ENCODE measurements at regions of chr14 and their contacts with region 1.

Region 1: GRCh38 chr14:60164712-60165546 is at the start of gene DHRS7:
- DNase-seq: peak; percentile 79
- H3K4me3 Mint-ChIP-seq: peak within 1 kb of the TSS; percentile 89
- H3K27ac Mint-ChIP-seq: peak within 1 kb of the TSS; percentile 81
- H3K4me1 Mint-ChIP-seq: peaks cover 14% of the 10 kb centered on the region
- H3K27me3 Mint-ChIP-seq: no peaks in the 10 kb centered on the region
- CTCF ChIP-seq: peak; percentile 52
- total RNA-seq, gene DHRS7: 71.4 and 96.4 TPM in 2 replicates

Region 2: GRCh38 chr14:59964251-59965007 is 200.5 kb before region 1 on chr14:
- CTCF ChIA-PET with region 1: interaction called, 23 read pairs
- POLR2A ChIA-PET with region 1: interaction called, 6 read pairs
- intact Hi-C with region 1: loop called (anchors 1 kb)
- DNase-seq: peak; percentile 3
- H3K4me3 Mint-ChIP-seq: peak overlapping the region; percentile 83
- H3K27ac Mint-ChIP-seq: no peak overlapping the region
- H3K4me1 Mint-ChIP-seq: peaks cover 18% of the 10 kb centered on the region
- H3K27me3 Mint-ChIP-seq: no peaks in the 10 kb centered on the region
- CTCF ChIP-seq: no peak

Region 3: DNA sequence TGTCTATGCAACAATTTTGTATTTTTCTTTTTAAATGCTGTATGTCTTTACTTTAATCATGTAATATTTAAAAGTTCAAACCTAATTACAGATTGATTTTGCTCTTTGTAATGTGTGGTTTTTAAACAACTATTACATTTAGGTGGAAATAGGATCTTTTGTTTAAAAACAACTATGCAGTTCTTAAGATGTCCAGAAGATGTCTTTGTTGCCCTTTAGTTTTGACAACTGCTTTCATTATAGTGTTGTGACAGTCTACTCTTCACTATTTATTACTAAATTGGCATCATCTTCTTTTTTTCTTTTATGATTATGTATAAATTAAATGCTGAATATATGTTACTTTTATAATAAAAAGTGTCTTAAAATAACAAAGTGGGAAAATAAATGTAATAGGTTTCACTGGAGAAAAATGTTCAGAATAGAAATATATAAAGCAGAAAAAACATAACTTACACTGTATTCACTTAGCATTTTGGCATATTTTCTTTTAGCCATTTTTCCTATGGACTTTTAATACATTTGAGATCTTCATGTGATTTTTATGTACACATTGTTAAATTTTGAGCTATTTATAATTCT is 100.3 kb before region 1 on chr14:
- CTCF ChIA-PET with region 1: interaction called, 20 read pairs
- POLR2A ChIA-PET with region 1: interaction called, 11 read pairs
- intact Hi-C with region 1: loop called (anchors 1 kb)
- DNase-seq: peak; percentile 44
- H3K4me3 Mint-ChIP-seq: no peak overlapping the region
- H3K27ac Mint-ChIP-seq: no peak overlapping the region
- H3K4me1 Mint-ChIP-seq: peaks cover 8% of the 10 kb centered on the region
- H3K27me3 Mint-ChIP-seq: no peaks in the 10 kb centered on the region
- CTCF ChIP-seq: peak; percentile 53

Region 4: GRCh38 chr14:60091550-60092530 is 73.1 kb before region 1 on chr14 and contains the start of gene PCNX4:
- CTCF ChIA-PET with region 1: interaction called, 8 read pairs
- POLR2A ChIA-PET with region 1: interaction called, 19 read pairs
- intact Hi-C with region 1: loop called (anchors 2 kb)
- DNase-seq: peak; percentile 99
- H3K4me3 Mint-ChIP-seq: peak within 1 kb of the TSS; percentile 93
- H3K27ac Mint-ChIP-seq: peak within 1 kb of the TSS; percentile 97
- H3K4me1 Mint-ChIP-seq: peaks cover 26% of the 10 kb centered on the region
- H3K27me3 Mint-ChIP-seq: no peaks in the 10 kb centered on the region
- CTCF ChIP-seq: no peak
- total RNA-seq, gene PCNX4: 62.8 and 63.3 TPM in 2 replicates

Region 5: GRCh38 chr14:60151715-60152114 is 13.2 kb before region 1 on chr14:
- CTCF ChIA-PET with region 1: interaction called, 5 read pairs
- POLR2A ChIA-PET with region 1: interaction called, 63 read pairs
- intact Hi-C with region 1: no loop called
- DNase-seq: peak; percentile 90
- H3K4me3 Mint-ChIP-seq: no peak overlapping the region
- H3K27ac Mint-ChIP-seq: peak overlapping the region; percentile 89
- H3K4me1 Mint-ChIP-seq: peaks cover 10% of the 10 kb centered on the region
- H3K27me3 Mint-ChIP-seq: no peaks in the 10 kb centered on the region
- CTCF ChIP-seq: no peak

Region 6: DNA sequence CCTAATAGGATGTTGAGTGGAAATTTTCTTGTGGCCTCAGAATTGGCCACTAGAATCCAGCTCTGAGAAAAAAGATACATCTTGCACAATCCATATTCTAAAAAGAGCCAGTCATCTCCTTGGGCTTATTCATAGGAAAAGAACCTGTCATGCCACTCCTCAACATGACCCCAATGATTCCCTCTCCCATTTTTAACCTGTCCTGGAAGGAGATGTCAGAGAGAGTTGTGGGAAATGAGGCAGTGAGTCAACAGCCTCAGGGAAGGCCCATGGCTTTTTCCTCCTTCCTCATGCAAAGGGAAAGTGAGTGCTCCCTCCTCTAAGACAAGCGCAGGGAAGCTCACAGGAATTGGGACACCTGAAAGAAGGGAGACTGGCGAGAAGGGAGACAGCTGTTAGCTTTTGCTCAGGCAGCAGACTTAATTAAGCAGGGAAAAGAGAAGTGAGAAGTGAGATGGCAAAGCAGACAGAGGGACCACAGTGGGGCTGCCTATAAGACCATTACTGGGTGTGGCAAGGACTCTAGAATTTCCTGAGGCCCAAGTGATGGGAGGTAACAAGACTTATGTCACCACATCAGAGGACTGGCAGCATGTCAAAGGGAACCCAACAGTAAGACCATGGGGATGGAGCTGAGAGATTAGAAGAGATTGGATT is 10.4 kb after region 1 on chr14:
- CTCF ChIA-PET with region 1: interaction called, 7 read pairs
- POLR2A ChIA-PET with region 1: interaction called, 17 read pairs
- intact Hi-C with region 1: no loop called
- DNase-seq: peak; percentile 40
- H3K4me3 Mint-ChIP-seq: no peak overlapping the region
- H3K27ac Mint-ChIP-seq: no peak overlapping the region
- H3K4me1 Mint-ChIP-seq: peaks cover 20% of the 10 kb centered on the region
- H3K27me3 Mint-ChIP-seq: no peaks in the 10 kb centered on the region
- CTCF ChIP-seq: no peak

Region 7: GRCh38 chr14:60248697-60249318 is 83.9 kb after region 1 on chr14 and contains the start of gene PPM1A:
- CTCF ChIA-PET with region 1: interaction called, 3 read pairs
- POLR2A ChIA-PET with region 1: interaction called, 13 read pairs
- intact Hi-C with region 1: no loop called
- DNase-seq: peak; percentile 89
- H3K4me3 Mint-ChIP-seq: peak within 1 kb of the TSS; percentile 98
- H3K27ac Mint-ChIP-seq: peak within 1 kb of the TSS; percentile 99
- H3K4me1 Mint-ChIP-seq: peaks cover 25% of the 10 kb centered on the region
- H3K27me3 Mint-ChIP-seq: no peaks in the 10 kb centered on the region
- CTCF ChIP-seq: no peak
- total RNA-seq, gene PPM1A: 47.2 and 50.4 TPM in 2 replicates

Measured in MCF 10A (cell line).